AG04449 (cell line): ENCODE measurements at regions of chr1 and their contacts with region 1.

Region 1: GRCh38 chr1:33161061-33161681 is 20.7 kb downstream of the TRIM62 start:
- DNase-seq: no peak
- H3K4me3 ChIP-seq: no peak overlapping the region
- CTCF ChIP-seq: no peak

Region 2: GRCh38 chr1:33094971-33095604 is 66.1 kb before region 1 on chr1:
- CTCF ChIA-PET with region 1: no interaction called
- POLR2A ChIA-PET with region 1: no interaction called
- DNase-seq: no peak
- H3K4me3 ChIP-seq: no peak overlapping the region
- CTCF ChIP-seq: peak; percentile 83

Region 3: GRCh38 chr1:33147997-33148314 is 13.2 kb before region 1 on chr1:
- CTCF ChIA-PET with region 1: interaction called, 17 read pairs
- POLR2A ChIA-PET with region 1: no interaction called
- DNase-seq: no peak
- H3K4me3 ChIP-seq: no peak overlapping the region
- CTCF ChIP-seq: peak; percentile 34